Naive thymus-derived CD8-positive, alpha-beta T cell (primary cell): ENCODE measurements at regions of chr1 and their contacts with region 1.

Region 1: DNA sequence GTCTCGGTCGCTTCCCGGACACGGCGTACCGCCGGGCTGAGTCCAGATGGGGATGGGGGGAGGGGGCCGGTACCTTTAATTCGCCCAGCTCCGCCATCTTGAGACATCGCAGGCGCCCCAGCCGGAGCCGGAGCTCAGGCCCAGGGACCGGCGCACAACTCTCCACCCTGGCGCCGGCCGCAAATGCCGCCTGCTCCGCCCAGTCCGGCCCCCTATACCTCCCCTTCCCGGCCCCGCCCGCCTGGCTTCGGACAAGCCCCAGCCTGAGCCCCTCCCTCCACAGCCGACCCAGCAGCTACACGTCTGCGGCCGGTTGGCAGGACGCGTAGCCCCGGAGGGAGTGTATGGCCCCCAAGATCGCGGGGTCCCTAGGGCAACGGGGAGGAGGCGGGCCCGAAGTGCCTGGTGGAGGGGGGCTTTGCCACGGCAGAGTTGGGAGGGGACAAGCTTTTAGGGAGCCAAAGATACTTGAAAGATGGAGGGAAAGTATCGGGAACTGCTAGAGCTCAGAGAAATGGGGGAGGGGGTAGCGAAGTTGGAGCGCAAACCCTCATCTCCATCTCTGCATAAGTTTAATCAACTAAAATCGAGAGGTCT is at the start of gene PIAS3:
- DNase-seq: peak; percentile 66 to 87 (median 76)
- ATAC-seq: peak; percentile 79 to 88
- H3K4me3 Mint-ChIP-seq: peak within 1 kb of the TSS; percentile 95 to 99 (median 98)
- H3K27ac Mint-ChIP-seq: peak within 1 kb of the TSS; percentile 85 to 96 (median 95)
- H3K4me1 Mint-ChIP-seq: peaks cover 13 to 21% (median 14%) of the 10 kb centered on the region in 4 donors
- H3K27me3 Mint-ChIP-seq: peaks cover 0 to 4% (median 0%) of the 10 kb centered on the region in 5 donors
- polyA plus RNA-seq, gene PIAS3: 10.7 to 14.7 (median 12.4) TPM

Region 2: DNA sequence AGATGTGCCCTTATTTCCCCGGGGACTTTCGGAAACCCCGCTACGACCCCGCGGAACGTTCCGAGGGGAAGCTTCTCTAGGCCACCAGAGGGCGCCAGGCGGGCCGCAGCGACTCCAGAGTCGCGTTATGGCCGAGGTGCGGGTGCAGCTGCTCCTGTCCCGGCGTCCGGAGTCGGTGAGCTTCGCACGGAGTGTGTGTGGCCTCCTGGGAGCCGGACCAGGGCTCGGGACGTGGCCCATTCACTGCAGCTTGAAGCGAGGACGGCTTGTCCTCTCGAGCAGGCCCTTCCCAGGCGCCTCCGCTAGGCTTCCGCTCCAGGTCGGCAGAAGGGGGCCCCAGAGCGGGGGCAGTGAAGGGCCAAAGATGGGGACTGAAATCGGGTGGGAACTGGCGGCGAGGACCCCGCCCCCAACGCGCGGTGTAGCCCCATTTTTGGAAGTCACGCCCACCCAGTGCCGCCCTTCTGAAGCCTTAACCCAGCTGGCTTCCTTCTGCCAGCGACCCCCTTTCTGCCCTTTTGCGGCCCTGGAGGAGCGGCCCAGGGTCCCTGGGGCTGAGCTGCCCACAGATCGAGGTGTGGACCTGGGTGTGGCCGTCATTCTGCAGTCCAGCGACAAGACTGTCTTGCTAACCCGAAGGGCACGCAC is 13.4 kb before region 1 on chr1 and contains the start of gene NUDT17:
- POLR2A ChIA-PET with region 1: interaction called, 96 read pairs
- DNase-seq: peak; percentile 53 to 87 (median 74)
- ATAC-seq: peak; percentile 83 to 84
- H3K4me3 Mint-ChIP-seq: peak within 1 kb of the TSS in 1 of 10 donors; percentile 22
- H3K27ac Mint-ChIP-seq: peak within 1 kb of the TSS in 6 of 10 donors; percentile 71 to 87 (median 76)
- H3K4me1 Mint-ChIP-seq: peaks cover 9 to 14% (median 13%) of the 10 kb centered on the region in 4 donors
- H3K27me3 Mint-ChIP-seq: no peaks in the 10 kb centered on the region
- polyA plus RNA-seq, gene NUDT17: 2.0 to 3.9 (median 3.4) TPM

Region 3: GRCh38 chr1:145918144-145918992 is 59.4 kb after region 1 on chr1 and contains the start of gene PEX11B:
- POLR2A ChIA-PET with region 1: interaction called, 34 read pairs
- DNase-seq: peak; percentile 86 to 96 (median 91)
- ATAC-seq: peak; percentile 91 to 92
- H3K4me3 Mint-ChIP-seq: peak within 1 kb of the TSS; percentile 87 to 94 (median 92)
- H3K27ac Mint-ChIP-seq: peak within 1 kb of the TSS; percentile 91 to 97 (median 96)
- H3K4me1 Mint-ChIP-seq: peaks cover 29 to 59% (median 52%) of the 10 kb centered on the region in 4 donors
- H3K27me3 Mint-ChIP-seq: no peaks in the 10 kb centered on the region
- polyA plus RNA-seq, gene PEX11B: 35.3 to 50.3 (median 44.0) TPM

Region 4: GRCh38 chr1:145942405-145942804 is 83.4 kb after region 1 on chr1:
- POLR2A ChIA-PET with region 1: no interaction called
- DNase-seq: no peak
- ATAC-seq: no peak
- H3K4me3 Mint-ChIP-seq: no peak overlapping the region
- H3K27ac Mint-ChIP-seq: peak overlapping the region in 4 of 10 donors; percentile 8 to 73 (median 18)
- H3K4me1 Mint-ChIP-seq: peaks cover 0 to 22% (median 10%) of the 10 kb centered on the region in 4 donors
- H3K27me3 Mint-ChIP-seq: no peaks in the 10 kb centered on the region

Region 5: DNA sequence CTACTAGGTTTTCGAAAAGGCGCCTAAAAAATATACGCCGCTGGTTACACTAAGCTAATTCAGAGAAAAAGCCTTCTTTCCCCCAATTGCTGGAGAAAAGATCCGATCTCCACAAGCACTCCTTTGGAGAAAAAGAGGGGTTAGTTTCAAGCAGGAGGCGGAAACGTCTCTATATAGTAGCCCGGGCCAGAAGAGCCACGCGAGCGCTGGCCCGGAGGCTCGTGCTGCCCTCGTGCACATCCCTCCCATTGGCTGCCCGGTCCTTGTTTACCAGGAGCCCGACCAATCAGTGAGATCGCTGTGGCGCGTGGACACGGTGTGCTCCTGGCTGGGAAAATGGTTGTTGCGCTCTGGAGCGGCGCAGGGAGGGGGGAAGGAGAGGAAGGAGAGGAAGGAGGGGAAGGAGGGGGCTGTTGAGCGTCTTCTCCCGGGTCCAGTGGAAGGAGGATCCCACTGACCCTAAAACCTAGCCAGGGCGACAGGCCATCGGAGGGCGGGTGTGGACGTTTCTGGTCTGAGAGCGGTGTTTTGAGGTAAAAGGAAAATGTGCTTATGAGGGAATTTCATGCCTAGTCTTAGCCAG is 137.5 kb after region 1 on chr1 and contains the start of gene TXNIP:
- POLR2A ChIA-PET with region 1: interaction called, 39 read pairs
- DNase-seq: peak; percentile 88 to 98 (median 91)
- ATAC-seq: peak; percentile 67 to 85
- H3K4me3 Mint-ChIP-seq: peak within 1 kb of the TSS; percentile 91 to 100 (median 99)
- H3K27ac Mint-ChIP-seq: peak within 1 kb of the TSS; percentile 95 to 100 (median 99)
- H3K4me1 Mint-ChIP-seq: peaks cover 31 to 72% (median 51%) of the 10 kb centered on the region in 4 donors
- H3K27me3 Mint-ChIP-seq: no peaks in the 10 kb centered on the region
- polyA plus RNA-seq, gene TXNIP: 4,009 to 5,114 (median 5,016) TPM